Activated T-helper 2 cell treated with anti-CD3 and anti-CD28 coated beads, Interferon-gamma antibody, Interleukin-2, Interleukin-4, amounts not matched to agents 10 μg/mL and 5 μg/mL and 100 μg/mL, durations not matched to agents 14 hours and 24 hours and 36 hours (primary cell): ENCODE measurements at regions of chr2 and their contacts with region 1.

Region 1: DNA sequence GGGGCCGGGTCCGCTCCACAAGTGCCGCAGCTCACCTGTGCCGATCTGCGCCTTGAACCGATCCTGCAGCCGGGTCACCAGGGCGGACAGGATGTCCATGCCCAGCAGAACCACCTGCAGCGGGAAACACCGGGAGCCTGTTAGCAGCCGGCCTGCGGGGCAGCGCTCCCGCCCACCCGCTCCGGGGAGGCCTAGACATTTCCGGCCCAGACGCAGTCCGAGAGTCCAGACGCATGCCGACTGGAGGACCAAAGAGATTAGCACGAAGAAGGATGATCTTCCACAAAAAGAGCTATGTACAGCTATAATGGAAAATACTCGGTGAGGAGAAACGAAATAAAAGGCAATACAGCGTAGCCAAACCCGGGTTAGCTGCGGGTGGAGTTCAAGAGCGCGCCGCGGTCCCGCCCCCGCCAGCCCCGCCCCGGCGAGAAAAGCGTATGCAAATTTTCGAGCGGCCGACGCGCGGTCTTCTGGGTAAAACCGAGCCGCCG is 421 bp upstream of the RNU4ATAC start:
- DNase-seq: no peak
- H3K4me3 Mint-ChIP-seq: peak overlapping the region; percentile 96
- H3K27ac Mint-ChIP-seq: peak overlapping the region; percentile 99
- H3K4me1 Mint-ChIP-seq: peaks cover 53% of the 10 kb centered on the region
- H3K27me3 Mint-ChIP-seq: no peaks in the 10 kb centered on the region

Region 2: DNA sequence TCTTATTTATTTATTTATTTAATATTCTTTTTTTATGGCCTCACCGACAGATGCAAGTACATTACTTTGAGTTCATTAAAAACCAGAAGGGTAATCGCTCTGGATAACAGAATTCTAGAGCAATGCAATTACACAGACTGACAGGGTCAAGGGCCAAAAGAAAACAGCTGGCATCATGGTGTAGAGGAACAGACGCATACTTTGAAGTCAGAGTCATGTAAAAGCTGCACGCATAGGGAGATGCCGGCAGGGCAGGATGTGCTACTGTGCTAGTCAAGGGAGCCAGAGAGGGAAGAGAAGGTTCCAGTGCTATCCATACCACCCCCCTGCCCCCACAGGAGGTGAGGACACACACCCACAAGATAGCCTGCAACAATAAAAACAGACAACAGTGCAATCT is 130.1 kb before region 1 on chr2:
- intact Hi-C with region 1: loop called (anchors 5 kb)
- DNase-seq: no peak
- H3K4me3 Mint-ChIP-seq: no peak overlapping the region
- H3K27ac Mint-ChIP-seq: no peak overlapping the region
- H3K4me1 Mint-ChIP-seq: no peaks in the 10 kb centered on the region
- H3K27me3 Mint-ChIP-seq: no peaks in the 10 kb centered on the region

Region 3: GRCh38 chr2:121479882-121480522 is 50.3 kb before region 1 on chr2:
- intact Hi-C with region 1: no loop called
- DNase-seq: no peak
- H3K4me3 Mint-ChIP-seq: no peak overlapping the region
- H3K27ac Mint-ChIP-seq: no peak overlapping the region
- H3K4me1 Mint-ChIP-seq: peaks cover 20% of the 10 kb centered on the region
- H3K27me3 Mint-ChIP-seq: no peaks in the 10 kb centered on the region

Region 4: GRCh38 chr2:121583555-121583954 is 53.3 kb after region 1 on chr2:
- intact Hi-C with region 1: loop called (anchors 1 kb)
- DNase-seq: no peak
- H3K4me3 Mint-ChIP-seq: no peak overlapping the region
- H3K27ac Mint-ChIP-seq: no peak overlapping the region
- H3K4me1 Mint-ChIP-seq: peaks cover 19% of the 10 kb centered on the region
- H3K27me3 Mint-ChIP-seq: no peaks in the 10 kb centered on the region

Region 5: DNA sequence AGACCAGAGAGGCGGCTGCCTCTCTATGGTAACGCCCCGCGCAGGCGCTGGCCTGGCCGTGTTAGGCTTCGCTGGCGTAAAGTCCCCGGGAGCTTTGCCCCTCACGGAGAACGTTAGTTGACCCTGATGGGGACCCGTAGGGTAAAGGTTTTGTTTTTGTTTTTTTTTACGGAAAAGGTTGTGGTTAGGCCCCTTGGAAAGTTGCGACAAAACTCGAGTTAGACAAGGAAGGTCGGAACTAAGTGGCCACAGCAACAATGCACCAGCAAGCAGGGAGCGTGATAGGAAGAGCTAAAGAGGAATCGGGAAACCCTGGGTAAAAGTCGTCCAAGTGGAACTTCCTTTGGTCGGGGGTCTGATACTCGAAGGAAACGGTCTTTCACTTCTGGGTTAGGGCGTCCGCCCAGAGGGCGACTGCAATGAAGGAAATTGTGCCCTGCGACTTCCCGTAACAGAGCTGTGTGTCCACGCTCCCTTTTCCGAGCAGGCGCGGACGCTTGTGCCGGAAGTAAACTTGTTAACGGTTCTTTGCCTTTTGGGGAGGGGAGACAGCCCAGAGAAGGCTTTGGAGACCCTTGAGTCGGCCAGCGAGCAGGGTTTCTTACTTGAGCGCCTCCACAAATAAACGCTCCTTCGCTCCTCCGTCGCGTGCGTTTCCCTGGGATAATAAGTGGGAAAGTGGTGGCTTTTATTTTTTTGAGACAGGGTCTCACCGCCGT is 119.5 kb after region 1 on chr2:
- intact Hi-C with region 1: loop called (anchors 1 kb)
- DNase-seq: peak; percentile 96
- H3K4me3 Mint-ChIP-seq: peak overlapping the region; percentile 98
- H3K27ac Mint-ChIP-seq: peak overlapping the region; percentile 98
- H3K4me1 Mint-ChIP-seq: peaks cover 49% of the 10 kb centered on the region
- H3K27me3 Mint-ChIP-seq: no peaks in the 10 kb centered on the region

Region 6: DNA sequence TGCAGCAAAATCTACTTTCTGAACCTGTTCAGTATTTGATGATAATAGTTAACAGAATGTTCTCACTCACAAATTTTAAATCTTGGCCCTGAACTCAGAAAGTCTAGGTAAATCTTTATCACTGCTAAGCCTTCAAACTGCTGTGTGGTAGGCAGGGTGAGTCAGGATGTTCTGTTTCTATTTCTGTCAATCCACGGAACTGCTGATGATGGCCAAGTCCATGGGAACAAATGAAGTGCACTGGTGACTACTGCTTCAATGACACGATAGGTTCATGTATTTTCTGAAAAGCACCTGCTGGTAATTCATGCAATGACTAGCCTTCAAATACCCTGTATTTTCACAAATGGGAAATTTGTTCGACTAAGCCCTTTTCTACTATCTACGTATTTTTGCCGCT is 192.2 kb after region 1 on chr2:
- intact Hi-C with region 1: loop called (anchors 1 kb)
- DNase-seq: no peak
- H3K4me3 Mint-ChIP-seq: no peak overlapping the region
- H3K27ac Mint-ChIP-seq: peak overlapping the region; percentile 87
- H3K4me1 Mint-ChIP-seq: peaks cover 18% of the 10 kb centered on the region
- H3K27me3 Mint-ChIP-seq: no peaks in the 10 kb centered on the region

Region 7: GRCh38 chr2:121755236-121756111 is 225.2 kb after region 1 on chr2 and contains the start of gene TSN:
- intact Hi-C with region 1: loop called (anchors 1 kb)
- DNase-seq: peak; percentile 97
- H3K4me3 Mint-ChIP-seq: peak within 1 kb of the TSS; percentile 97
- H3K27ac Mint-ChIP-seq: peak within 1 kb of the TSS; percentile 91
- H3K4me1 Mint-ChIP-seq: peaks cover 22% of the 10 kb centered on the region
- H3K27me3 Mint-ChIP-seq: no peaks in the 10 kb centered on the region
- total RNA-seq, gene TSN: 67.6 and 72.5 TPM in 2 replicates